PC-3 (cell line): ENCODE measurements at regions of chr3 and their contacts with region 1.

Region 1: GRCh38 chr3:193842029-193842798 is 249.2 kb downstream of the OPA1 start:
- DNase-seq: no peak
- ATAC-seq: no peak
- H3K4me3 ChIP-seq: no peak overlapping the region
- H3K27ac ChIP-seq: no peak overlapping the region
- H3K4me1 ChIP-seq: peaks cover 38% of the 10 kb centered on the region
- H3K27me3 ChIP-seq: no peaks in the 10 kb centered on the region
- CTCF ChIP-seq: no peak

Region 2: DNA sequence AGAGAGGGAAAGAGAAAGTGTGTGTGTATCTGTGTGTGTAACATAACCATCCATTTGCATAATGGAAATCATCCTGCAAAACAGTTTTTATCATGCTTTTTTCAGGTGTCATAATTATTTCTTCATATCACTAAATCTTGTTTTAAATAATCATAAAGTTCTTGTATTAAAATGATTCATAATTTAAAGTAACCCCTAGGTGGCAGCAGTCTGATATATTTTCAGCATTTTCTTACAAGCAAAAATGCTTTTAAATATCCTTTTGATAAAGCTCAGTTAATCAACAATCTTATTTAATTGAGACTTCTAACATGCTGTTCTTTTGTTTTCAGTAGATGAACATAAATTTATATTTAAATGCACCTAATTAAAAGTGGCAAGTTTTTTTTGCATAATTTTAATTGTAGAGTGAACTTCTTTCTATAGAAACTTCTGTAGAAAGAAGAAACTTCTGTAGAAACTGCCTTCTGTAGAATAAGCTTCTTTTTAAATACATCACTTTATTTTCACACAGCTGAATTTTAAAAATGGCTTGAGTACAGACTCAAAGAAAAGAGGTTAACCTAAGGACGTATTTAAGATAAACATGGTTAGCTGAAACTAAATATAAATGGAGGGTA is 176.7 kb before region 1 on chr3:
- CTCF ChIA-PET with region 1: no interaction called
- POLR2A ChIA-PET with region 1: no interaction called
- intact Hi-C with region 1: no loop called
- DNase-seq: peak; percentile 63
- ATAC-seq: no peak
- H3K4me3 ChIP-seq: no peak overlapping the region
- H3K27ac ChIP-seq: no peak overlapping the region
- H3K4me1 ChIP-seq: no peaks in the 10 kb centered on the region
- H3K27me3 ChIP-seq: no peaks in the 10 kb centered on the region
- CTCF ChIP-seq: peak; percentile 75

Region 3: GRCh38 chr3:193805509-193805908 is 36.7 kb before region 1 on chr3:
- CTCF ChIA-PET with region 1: interaction called, 3 read pairs
- POLR2A ChIA-PET with region 1: no interaction called
- intact Hi-C with region 1: loop called (anchors 1 kb)
- DNase-seq: peak; percentile 99
- ATAC-seq: peak; percentile 96
- H3K4me3 ChIP-seq: no peak overlapping the region
- H3K27ac ChIP-seq: peak overlapping the region; percentile 55
- H3K4me1 ChIP-seq: peaks cover 10% of the 10 kb centered on the region
- H3K27me3 ChIP-seq: no peaks in the 10 kb centered on the region
- CTCF ChIP-seq: no peak

Region 4: DNA sequence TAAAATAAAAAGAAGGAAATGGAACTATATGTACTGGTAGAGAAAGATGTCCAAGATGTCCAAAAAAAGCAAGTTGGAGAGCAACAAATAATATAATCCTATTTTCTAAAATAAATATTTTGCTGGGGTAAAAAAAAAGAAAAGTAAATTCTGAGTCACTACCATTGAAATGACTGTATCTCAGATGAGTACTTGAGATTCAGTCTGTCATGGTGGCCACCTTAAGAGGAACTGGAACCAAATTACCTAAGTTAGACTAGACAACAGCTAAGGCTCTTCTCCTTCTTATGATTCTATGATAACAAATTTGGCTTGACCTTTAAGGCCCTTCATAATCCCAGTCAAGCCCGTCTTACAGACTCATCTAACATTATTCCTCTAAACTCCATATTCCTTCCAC is 23.1 kb after region 1 on chr3:
- CTCF ChIA-PET with region 1: no interaction called
- POLR2A ChIA-PET with region 1: no interaction called
- intact Hi-C with region 1: no loop called
- DNase-seq: no peak
- ATAC-seq: no peak
- H3K4me3 ChIP-seq: no peak overlapping the region
- H3K27ac ChIP-seq: no peak overlapping the region
- H3K4me1 ChIP-seq: peaks cover 41% of the 10 kb centered on the region
- H3K27me3 ChIP-seq: no peaks in the 10 kb centered on the region
- CTCF ChIP-seq: no peak

Region 5: GRCh38 chr3:193928354-193929209 is 86.4 kb after region 1 on chr3:
- CTCF ChIA-PET with region 1: no interaction called
- POLR2A ChIA-PET with region 1: no interaction called
- intact Hi-C with region 1: loop called (anchors 2 kb)
- DNase-seq: peak; percentile 87
- ATAC-seq: peak; percentile 94
- H3K4me3 ChIP-seq: peak overlapping the region; percentile 6; the same call in 1 of the 2 replicates
- H3K27ac ChIP-seq: peak overlapping the region; percentile 88
- H3K4me1 ChIP-seq: peaks cover 28% of the 10 kb centered on the region
- H3K27me3 ChIP-seq: no peaks in the 10 kb centered on the region
- CTCF ChIP-seq: no peak

Region 6: DNA sequence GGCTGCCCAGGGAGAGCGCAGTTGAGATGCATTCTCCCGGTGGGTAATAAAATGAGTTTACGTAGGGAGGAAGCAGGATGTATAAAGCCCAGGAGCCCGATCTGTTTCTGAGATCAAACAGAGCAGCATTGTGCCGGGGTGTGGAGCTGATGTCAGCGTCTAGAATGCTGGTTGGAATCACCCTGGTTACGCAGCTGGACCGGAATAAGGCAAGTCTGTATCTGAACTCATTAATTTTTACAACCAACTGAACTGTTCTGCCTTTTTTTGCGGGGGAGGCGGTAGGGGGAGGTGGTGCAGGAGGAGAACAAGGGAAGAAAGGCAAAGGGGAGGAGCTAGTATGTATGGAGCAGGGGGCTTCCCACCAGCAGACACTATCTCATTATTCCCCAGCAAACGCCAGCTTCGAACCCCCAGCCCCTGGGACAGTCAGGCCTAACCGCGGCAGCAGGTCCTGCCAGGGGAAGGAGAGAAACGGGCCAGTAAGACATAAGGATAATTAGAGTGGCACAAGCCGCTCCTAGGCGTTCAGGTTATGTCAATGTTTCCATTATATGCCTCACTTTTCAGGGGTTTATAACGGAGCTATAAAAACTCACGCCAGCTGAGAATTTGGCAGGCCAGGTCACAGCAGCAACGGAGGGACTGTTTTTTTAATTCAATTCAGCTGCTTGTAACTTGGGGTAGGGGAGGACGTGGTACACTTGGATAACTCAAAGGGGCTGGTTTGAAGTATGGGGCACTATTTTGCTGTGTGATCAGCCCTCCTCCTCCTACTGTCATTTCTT is 118.5 kb after region 1 on chr3:
- CTCF ChIA-PET with region 1: no interaction called
- POLR2A ChIA-PET with region 1: no interaction called
- intact Hi-C with region 1: loop called (anchors 2 kb)
- DNase-seq: peak; percentile 66
- ATAC-seq: peak; percentile 89
- H3K4me3 ChIP-seq: no peak overlapping the region
- H3K27ac ChIP-seq: peak overlapping the region; percentile 55
- H3K4me1 ChIP-seq: peaks cover 11% of the 10 kb centered on the region
- H3K27me3 ChIP-seq: no peaks in the 10 kb centered on the region
- CTCF ChIP-seq: no peak

Region 7: GRCh38 chr3:194003125-194004057 is 161.2 kb after region 1 on chr3:
- CTCF ChIA-PET with region 1: no interaction called
- POLR2A ChIA-PET with region 1: interaction called, 3 read pairs
- intact Hi-C with region 1: loop called (anchors 1 kb)
- DNase-seq: peak; percentile 90
- ATAC-seq: peak; percentile 79
- H3K4me3 ChIP-seq: peak overlapping the region; percentile 56
- H3K27ac ChIP-seq: peak overlapping the region; percentile 82
- H3K4me1 ChIP-seq: peaks cover 40% of the 10 kb centered on the region
- H3K27me3 ChIP-seq: no peaks in the 10 kb centered on the region
- CTCF ChIP-seq: no peak

Region 8: GRCh38 chr3:194607592-194608389 is 765.6 kb after region 1 on chr3:
- CTCF ChIA-PET with region 1: no interaction called
- POLR2A ChIA-PET with region 1: no interaction called
- intact Hi-C with region 1: no loop called
- DNase-seq: no peak
- ATAC-seq: peak; percentile 21; the same call in 1 of the 2 replicates
- H3K4me3 ChIP-seq: no peak overlapping the region
- H3K27ac ChIP-seq: no peak overlapping the region
- H3K4me1 ChIP-seq: no peaks in the 10 kb centered on the region
- H3K27me3 ChIP-seq: no peaks in the 10 kb centered on the region
- CTCF ChIP-seq: no peak